ENCODE measurements at regions of chr15 and their contacts with region 1.

Region 1: GRCh38 chr15:40873625-40874561 is at the start of gene RHOV:
- DNase-seq: no peak
- ATAC-seq: peak; percentile 80
- H3K4me3 ChIP-seq: peak within 1 kb of the TSS; percentile 65
- H3K27ac ChIP-seq: peak within 1 kb of the TSS; percentile 78
- H3K4me1 ChIP-seq: peaks cover 37% of the 10 kb centered on the region
- H3K27me3 ChIP-seq: no peaks in the 10 kb centered on the region
- CTCF ChIP-seq: peak; percentile 44 to 63 (median 55); a peak in 5 of 6 replicates
- EP300 ChIP-seq: no peak
- POLR2A ChIP-seq: peak; percentile 90
- RAD21 ChIP-seq: peak; percentile 32; the same call in 1 of the 2 replicates
- polyA plus RNA-seq, gene RHOV: 0.24 to 1.3 TPM

Region 2: DNA sequence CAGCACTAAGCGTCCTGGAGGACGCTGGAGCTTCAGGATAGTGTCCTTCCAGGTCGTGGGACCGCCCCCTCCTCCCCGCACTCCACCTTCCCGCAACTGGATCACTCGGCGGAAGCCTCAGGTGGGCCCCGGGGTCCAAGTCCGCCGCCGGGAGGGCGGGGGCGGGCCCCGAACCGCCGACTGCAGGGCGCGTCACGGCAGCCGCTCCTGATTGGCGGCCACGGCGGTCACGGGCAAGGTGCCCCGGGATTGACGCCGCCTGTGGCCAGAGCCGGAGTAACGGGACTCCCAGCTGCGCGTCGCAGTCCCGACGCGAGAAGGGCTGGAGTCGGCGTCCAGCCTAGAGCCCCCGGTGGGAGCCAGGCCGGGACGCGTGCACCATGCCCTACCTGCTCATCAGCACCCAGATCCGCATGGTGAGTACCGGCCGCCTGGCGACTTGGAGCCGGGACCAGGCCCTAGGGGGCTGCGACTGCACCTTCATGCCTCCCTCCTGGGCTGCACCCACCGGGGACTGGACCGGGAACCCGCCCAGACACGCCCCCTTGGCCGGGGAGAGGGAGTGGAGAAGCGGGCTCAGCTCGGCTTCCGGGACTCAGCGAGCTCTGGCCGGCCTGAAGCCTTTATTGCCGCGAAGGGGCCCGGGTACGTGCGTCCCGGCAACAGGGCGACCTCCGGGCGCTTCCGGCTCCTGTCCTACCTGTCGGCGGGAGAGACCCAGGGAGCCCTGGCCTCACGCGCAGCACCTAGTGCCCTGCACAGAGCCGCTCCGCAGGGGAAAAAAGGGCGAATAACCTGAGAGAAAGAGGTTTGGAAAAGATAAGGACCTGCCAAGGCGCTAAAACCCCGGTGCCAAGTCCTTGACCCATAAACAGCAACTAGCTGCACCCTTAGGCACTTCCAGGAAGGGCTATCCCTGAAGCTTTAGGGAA is 109.8 kb before region 1 on chr15 and contains the start of gene GCHFR:
- CTCF ChIA-PET with region 1: no interaction called
- POLR2A ChIA-PET with region 1: interaction called, 13 read pairs
- RAD21 ChIA-PET with region 1: interaction called, 5 read pairs
- SMC1A ChIA-PET with region 1: interaction called, 3 read pairs
- in situ Hi-C with region 1: no loop called
- intact Hi-C with region 1: no loop called
- DNase-seq: no peak
- ATAC-seq: peak; percentile 70
- H3K4me3 ChIP-seq: peak within 1 kb of the TSS; percentile 78
- H3K27ac ChIP-seq: peak within 1 kb of the TSS; percentile 38
- H3K4me1 ChIP-seq: peaks cover 20% of the 10 kb centered on the region
- H3K27me3 ChIP-seq: no peaks in the 10 kb centered on the region
- CTCF ChIP-seq: peak; percentile 19 to 40 (median 40); a peak in 4 of 6 replicates
- EP300 ChIP-seq: no peak
- POLR2A ChIP-seq: peak; percentile 79
- RAD21 ChIP-seq: no peak
- polyA plus RNA-seq, gene GCHFR: 10.5 to 25.4 TPM

Region 3: GRCh38 chr15:40769274-40770146 is 104.4 kb before region 1 on chr15 and contains the start of gene C15orf62:
- CTCF ChIA-PET with region 1: interaction called, 3 read pairs
- POLR2A ChIA-PET with region 1: interaction called, 13 read pairs
- RAD21 ChIA-PET with region 1: interaction called, 5 read pairs
- SMC1A ChIA-PET with region 1: interaction called, 3 read pairs
- in situ Hi-C with region 1: no loop called
- intact Hi-C with region 1: no loop called
- DNase-seq: peak; percentile 53
- ATAC-seq: peak; percentile 51
- H3K4me3 ChIP-seq: no peak within 1 kb of the TSS
- H3K27ac ChIP-seq: peak within 1 kb of the TSS; percentile 65
- H3K4me1 ChIP-seq: peaks cover 32% of the 10 kb centered on the region
- H3K27me3 ChIP-seq: no peaks in the 10 kb centered on the region
- CTCF ChIP-seq: no peak
- EP300 ChIP-seq: no peak; a peak in 1 of 4 replicates
- POLR2A ChIP-seq: no peak; the same call in 1 of the 2 replicates
- RAD21 ChIP-seq: no peak
- polyA plus RNA-seq, gene C15orf62: 0.06 TPM in 1 of 2 experiments, not detected in the other

Region 4: GRCh38 chr15:40825661-40826088 is 48.2 kb before region 1 on chr15:
- CTCF ChIA-PET with region 1: no interaction called
- POLR2A ChIA-PET with region 1: no interaction called
- RAD21 ChIA-PET with region 1: no interaction called
- SMC1A ChIA-PET with region 1: no interaction called
- in situ Hi-C with region 1: no loop called
- intact Hi-C with region 1: no loop called
- DNase-seq: no peak
- ATAC-seq: no peak
- H3K4me3 ChIP-seq: no peak overlapping the region
- H3K27ac ChIP-seq: no peak overlapping the region
- H3K4me1 ChIP-seq: no peaks in the 10 kb centered on the region
- H3K27me3 ChIP-seq: no peaks in the 10 kb centered on the region; a peak in 1 of 4 replicates
- CTCF ChIP-seq: no peak
- EP300 ChIP-seq: no peak
- POLR2A ChIP-seq: no peak
- RAD21 ChIP-seq: no peak

Region 5: GRCh38 chr15:40847205-40847961 is 26.5 kb before region 1 on chr15:
- CTCF ChIA-PET with region 1: interaction called, 19 read pairs
- POLR2A ChIA-PET with region 1: interaction called, 39 read pairs
- RAD21 ChIA-PET with region 1: interaction called, 24 read pairs
- SMC1A ChIA-PET with region 1: interaction called, 5 read pairs
- in situ Hi-C with region 1: no loop called
- intact Hi-C with region 1: no loop called
- DNase-seq: peak; percentile 57
- ATAC-seq: peak; percentile 82
- H3K4me3 ChIP-seq: peak overlapping the region; percentile 45; the same call in 1 of the 2 replicates
- H3K27ac ChIP-seq: peak overlapping the region; percentile 76
- H3K4me1 ChIP-seq: peaks cover 26% of the 10 kb centered on the region
- H3K27me3 ChIP-seq: peaks cover 1 to 3% of the 10 kb centered on the region in 2 experiments; a peak in 1 of 4 replicates
- CTCF ChIP-seq: no peak
- EP300 ChIP-seq: no peak
- POLR2A ChIP-seq: no peak
- RAD21 ChIP-seq: no peak

Region 6: GRCh38 chr15:40886586-40886985 is 12.7 kb after region 1 on chr15:
- CTCF ChIA-PET with region 1: no interaction called
- POLR2A ChIA-PET with region 1: interaction called, 220 read pairs
- RAD21 ChIA-PET with region 1: interaction called, 551 read pairs
- SMC1A ChIA-PET with region 1: interaction called, 454 read pairs
- in situ Hi-C with region 1: no loop called
- intact Hi-C with region 1: no loop called
- DNase-seq: no peak
- ATAC-seq: no peak
- H3K4me3 ChIP-seq: no peak overlapping the region
- H3K27ac ChIP-seq: no peak overlapping the region
- H3K4me1 ChIP-seq: peaks cover 17% of the 10 kb centered on the region
- H3K27me3 ChIP-seq: no peaks in the 10 kb centered on the region
- CTCF ChIP-seq: no peak
- EP300 ChIP-seq: no peak
- POLR2A ChIP-seq: no peak
- RAD21 ChIP-seq: no peak

Region 7: DNA sequence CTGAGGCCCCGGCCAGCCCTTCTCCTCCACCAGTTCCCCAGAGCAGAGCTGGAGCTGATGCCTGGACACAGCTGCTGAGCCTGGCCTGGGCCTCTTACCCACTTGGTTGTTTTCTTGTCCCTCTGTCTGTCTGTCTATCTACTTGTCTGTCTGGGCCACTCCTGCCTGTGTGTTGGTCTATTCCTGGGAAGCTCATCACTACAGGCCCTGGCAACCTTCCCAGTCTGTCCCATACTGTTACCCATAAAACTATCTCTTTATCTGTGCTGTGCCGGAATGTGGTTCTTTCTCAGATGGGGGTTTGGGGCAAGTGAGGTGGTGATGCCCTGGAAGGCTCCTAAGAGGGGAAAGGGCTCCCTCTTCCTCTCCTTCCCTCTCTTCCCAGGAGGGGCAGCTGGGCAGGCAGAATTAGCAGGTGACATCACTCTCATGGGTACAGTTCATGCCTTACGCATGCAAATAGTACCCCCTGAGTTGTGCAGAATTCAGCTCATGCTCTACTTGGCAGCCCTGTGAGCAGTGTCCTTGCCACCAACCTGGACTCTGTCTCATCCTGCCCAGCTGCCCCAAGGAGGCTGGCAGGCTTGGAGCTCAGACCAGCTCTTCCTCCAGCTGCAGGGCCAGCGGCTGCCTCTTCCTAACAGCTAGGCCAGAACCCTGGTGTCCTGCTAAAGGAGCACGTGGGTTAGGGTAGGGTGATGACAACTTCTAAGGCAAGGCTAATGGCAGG is 82.5 kb after region 1 on chr15:
- CTCF ChIA-PET with region 1: no interaction called
- POLR2A ChIA-PET with region 1: no interaction called
- RAD21 ChIA-PET with region 1: no interaction called
- SMC1A ChIA-PET with region 1: no interaction called
- in situ Hi-C with region 1: no loop called
- intact Hi-C with region 1: no loop called
- DNase-seq: no peak
- ATAC-seq: no peak
- H3K4me3 ChIP-seq: no peak overlapping the region
- H3K27ac ChIP-seq: no peak overlapping the region
- H3K4me1 ChIP-seq: peaks cover 7% of the 10 kb centered on the region
- H3K27me3 ChIP-seq: no peaks in the 10 kb centered on the region
- CTCF ChIP-seq: no peak
- EP300 ChIP-seq: no peak
- POLR2A ChIP-seq: peak; percentile 30; the same call in 1 of the 2 replicates
- RAD21 ChIP-seq: no peak